AG04450 (cell line): ENCODE measurements at regions of chr3 and their contacts with region 1.

Region 1: DNA sequence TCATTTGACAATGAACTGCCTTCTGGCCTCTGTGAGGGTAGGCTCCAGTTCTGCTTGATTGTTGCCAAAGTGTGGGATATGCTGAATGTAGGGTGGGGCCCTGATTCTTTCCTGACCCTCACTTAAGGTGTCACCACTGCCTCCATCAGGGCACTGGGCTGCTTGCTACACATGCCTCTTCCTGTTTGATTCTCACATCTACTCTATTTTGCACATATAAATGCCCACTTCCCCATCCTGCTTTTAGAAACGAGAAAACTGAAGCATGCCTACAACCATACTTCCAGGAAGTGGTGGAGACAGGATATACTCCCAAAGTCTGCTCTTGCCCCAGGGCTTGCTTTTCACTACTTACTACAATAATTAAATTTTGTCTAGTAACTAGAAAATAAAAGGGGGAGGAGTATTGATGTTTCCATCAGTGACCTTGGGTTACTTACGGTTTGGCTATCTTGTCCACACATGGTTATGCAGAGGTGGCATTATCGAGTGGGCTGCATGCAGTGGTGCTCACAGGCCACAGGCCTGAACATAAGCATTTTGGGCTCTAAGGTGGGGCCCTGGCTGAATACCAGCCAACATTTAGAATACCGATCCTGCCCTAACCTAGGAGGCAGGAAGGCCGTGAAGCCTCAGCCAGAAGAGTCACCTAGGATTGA is 6.7 kb downstream of the ZDHHC3 start:
- DNase-seq: no peak
- H3K4me3 ChIP-seq: no peak overlapping the region
- H3K27ac ChIP-seq: no peak overlapping the region
- H3K27me3 ChIP-seq: no peaks in the 10 kb centered on the region
- CTCF ChIP-seq: no peak

Region 2: DNA sequence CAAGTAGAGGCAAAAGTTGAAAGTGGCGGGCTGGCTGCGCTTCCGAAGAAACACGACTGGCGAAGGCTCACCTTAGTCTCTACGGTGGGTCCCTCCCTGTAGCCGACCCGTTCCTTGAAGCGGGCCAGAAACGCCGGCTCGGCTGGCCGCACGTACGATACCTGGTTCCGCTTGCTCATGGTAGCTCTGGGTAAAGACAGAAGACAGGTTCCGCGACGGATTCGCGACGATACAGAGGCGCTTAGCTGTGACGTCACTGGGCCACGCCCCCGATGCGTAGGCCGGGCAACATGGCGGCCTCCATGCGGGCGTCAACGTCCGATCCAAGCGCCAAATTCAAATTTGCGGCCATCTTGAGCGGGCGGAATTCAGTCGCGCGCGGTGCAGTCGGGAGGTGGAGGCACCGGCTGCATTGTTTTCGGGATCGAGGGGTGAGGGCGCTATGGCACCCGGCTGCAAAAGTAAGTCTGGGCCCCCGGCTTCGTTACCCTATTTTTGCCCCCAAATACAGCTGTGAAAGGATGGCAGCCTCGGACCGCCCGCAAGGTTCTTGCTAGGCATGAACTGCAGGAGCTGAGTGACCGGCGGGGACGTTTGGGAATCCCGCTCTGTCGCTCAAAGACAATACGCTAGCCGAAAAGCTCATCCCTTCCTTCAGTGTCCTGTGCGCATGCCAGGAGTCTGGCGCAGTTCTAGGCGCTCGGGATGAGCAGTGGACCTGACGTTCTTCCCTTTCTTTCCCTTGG is 207.7 kb before region 1 on chr3 and contains the starts of genes KIAA1143 and KIF15:
- CTCF ChIA-PET with region 1: interaction called, 11 read pairs
- POLR2A ChIA-PET with region 1: no interaction called
- DNase-seq: peak; percentile 85
- H3K4me3 ChIP-seq: peak within 1 kb of the TSS; percentile 85
- H3K27ac ChIP-seq: peak within 1 kb of the TSS; percentile 39
- H3K27me3 ChIP-seq: no peaks in the 10 kb centered on the region
- CTCF ChIP-seq: no peak
- polyA plus RNA-seq, gene KIAA1143: 14.0 and 19.6 TPM in 2 replicates
- polyA plus RNA-seq, gene KIF15: 2.1 and 3.6 TPM in 2 replicates

Region 3: GRCh38 chr3:45001738-45002137 is 32.4 kb after region 1 on chr3:
- CTCF ChIA-PET with region 1: no interaction called
- POLR2A ChIA-PET with region 1: no interaction called
- DNase-seq: no peak
- H3K4me3 ChIP-seq: no peak overlapping the region
- H3K27ac ChIP-seq: no peak overlapping the region
- H3K27me3 ChIP-seq: no peaks in the 10 kb centered on the region
- CTCF ChIP-seq: 0 out of 2 replicates have a peak, but pooled peaks have one; percentile 13